Left colon (tissue), 2 donors: ENCODE measurements at regions of chr7 and their contacts with region 1.

Region 1: GRCh38 chr7:140517546-140518369 is 38.5 kb upstream of the MKRN1 start:
- DNase-seq: peak; percentile 89 to 96
- ATAC-seq: peak; percentile 76

Region 2: DNA sequence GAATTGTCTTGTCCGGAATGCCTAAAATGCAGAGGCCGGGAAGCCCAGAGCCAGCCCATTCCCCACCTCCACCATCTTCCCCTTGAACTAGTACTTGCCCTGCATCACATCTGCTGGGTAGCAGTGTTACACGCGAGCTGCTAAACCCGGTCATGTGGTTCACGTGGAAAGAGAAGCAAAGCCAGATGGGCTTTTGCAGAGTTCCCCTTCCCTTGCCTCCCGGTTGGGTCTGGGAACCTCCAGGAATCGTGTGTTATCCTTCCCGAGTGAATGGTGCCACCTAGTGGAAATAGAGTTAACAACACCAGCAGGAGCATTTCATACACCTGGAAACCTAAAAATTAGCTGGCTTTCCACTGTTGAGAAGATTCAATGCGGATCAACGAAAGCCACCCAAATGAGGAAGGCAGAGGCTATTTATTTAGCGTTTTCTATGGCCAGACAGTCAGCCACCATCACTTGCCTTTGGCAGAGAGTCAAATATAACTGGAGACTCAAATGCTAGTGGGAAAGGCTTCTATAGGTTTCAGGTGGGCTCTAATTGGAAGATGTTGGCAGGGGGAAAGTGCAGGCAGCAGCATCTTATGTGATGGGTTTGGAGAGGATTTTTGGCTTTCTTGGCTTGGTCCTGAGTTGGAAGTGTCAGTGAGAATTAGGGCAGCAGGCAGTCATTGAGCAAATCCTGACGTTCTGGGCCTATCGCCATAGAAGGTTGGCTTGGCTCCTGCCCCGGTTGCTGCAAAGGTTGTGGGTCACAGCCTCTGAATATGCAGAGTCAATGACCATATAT is 135.8 kb after region 1 on chr7:
- intact Hi-C with region 1: loop called (anchors 5 kb)
- DNase-seq: peak; percentile 47 to 55
- ATAC-seq: peak; percentile 59